Dendritic cell treated with granulocyte-macrophage colony-stimulating factor and Interleukin-4, amounts not matched to agents 40 ng/mL and 50 ng/mL, for 4 days (primary cell): ENCODE measurements at regions of chr2 and their contacts with region 1.

Region 1: DNA sequence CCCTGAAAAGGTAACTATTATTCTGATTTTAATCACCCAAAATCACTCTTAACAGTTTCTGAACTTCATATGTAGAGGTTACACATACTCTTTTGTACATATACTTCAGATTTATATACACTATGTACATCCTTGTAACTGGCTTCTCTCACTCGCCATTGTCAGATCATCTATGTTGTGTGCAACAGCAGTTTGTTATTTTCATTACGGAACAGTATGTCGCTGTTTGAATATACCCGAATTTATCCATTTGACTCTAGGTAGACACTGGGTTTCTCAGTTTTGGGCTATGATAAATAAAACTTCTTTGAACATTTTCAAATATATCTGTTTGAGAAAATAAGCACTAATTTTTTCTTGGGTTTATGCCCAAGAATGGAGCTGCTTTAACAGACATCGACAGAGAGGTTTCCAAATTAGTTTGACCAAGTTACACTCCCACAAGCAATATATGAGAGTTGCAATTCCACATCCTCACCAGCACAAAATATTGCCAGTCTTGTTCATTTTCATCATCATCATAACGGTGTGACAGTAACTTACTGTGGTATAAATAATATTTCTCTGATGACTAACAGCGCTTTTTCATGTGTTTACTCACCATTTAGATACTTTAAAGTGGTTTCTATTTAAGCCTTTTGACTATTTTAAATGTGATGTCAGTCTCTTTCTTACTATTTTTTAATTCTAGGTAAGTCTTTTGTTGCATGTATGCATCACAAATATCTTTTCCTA is 80.9 kb downstream of the SMC6 start:
- H3K4me3 Mint-ChIP-seq: no peak overlapping the region
- H3K27ac Mint-ChIP-seq: no peak overlapping the region
- H3K4me1 Mint-ChIP-seq: no peaks in the 10 kb centered on the region
- H3K27me3 Mint-ChIP-seq: no peaks in the 10 kb centered on the region

Region 2: GRCh38 chr2:17470855-17471641 is 201.7 kb before region 1 on chr2:
- intact Hi-C with region 1: loop called (anchors 5 kb)
- H3K4me3 Mint-ChIP-seq: no peak overlapping the region
- H3K27ac Mint-ChIP-seq: no peak overlapping the region
- H3K4me1 Mint-ChIP-seq: no peaks in the 10 kb centered on the region
- H3K27me3 Mint-ChIP-seq: no peaks in the 10 kb centered on the region

Region 3: GRCh38 chr2:17646081-17646554 is 26.6 kb before region 1 on chr2:
- intact Hi-C with region 1: loop called (anchors 1 kb)
- H3K4me3 Mint-ChIP-seq: no peak overlapping the region
- H3K27ac Mint-ChIP-seq: no peak overlapping the region
- H3K4me1 Mint-ChIP-seq: peaks cover 74% of the 10 kb centered on the region
- H3K27me3 Mint-ChIP-seq: no peaks in the 10 kb centered on the region